ENCODE measurements at regions of chr1 and their contacts with region 1.

Region 1: DNA sequence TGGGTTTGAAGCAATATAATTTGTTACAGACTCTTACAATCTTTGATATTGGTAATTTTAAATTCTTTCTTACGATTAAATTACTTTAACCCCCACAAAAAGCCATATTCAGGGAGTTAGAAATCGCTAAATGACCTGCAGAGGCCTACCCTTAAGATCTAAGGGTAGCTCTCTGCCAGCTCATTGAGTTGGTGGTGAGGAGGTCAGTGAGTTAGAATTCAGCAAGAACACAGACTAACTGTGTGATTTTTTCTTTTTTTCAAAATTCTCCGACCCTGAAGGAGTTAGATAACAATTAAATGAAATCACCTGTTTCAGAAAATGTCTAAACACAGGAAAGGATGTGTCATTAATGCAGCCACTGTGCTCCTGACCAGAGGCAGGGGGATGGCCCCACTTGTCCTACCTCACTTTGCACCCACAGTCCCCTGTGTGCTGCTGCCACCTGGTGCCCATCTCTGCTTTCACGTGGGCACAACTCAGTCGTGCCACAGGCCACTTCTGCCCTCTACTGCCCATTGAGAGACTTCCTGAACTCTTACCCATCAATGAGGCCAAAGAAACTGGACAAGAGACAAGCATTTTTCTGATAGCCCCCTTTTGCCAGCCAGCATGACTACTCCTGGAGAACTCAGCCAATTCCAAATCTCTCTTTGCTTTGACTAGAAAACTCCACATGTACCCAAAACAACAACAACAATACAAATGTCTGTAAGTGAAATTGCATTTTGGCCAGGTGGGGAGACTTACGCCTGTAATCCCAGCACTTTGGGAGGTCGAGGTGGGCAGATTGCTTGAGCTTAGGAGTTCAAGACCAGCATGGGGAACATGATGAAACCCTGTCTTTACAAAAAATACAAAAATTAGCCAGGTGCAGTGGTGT is 8.4 kb downstream of the CFAP45 start:
- ATAC-seq: peak; percentile 91 to 100 (median 96)
- H3K4me3 ChIP-seq: no peak overlapping the region
- H3K27ac ChIP-seq: no peak overlapping the region
- H3K4me1 ChIP-seq: no peaks in the 10 kb centered on the region

Region 2: DNA sequence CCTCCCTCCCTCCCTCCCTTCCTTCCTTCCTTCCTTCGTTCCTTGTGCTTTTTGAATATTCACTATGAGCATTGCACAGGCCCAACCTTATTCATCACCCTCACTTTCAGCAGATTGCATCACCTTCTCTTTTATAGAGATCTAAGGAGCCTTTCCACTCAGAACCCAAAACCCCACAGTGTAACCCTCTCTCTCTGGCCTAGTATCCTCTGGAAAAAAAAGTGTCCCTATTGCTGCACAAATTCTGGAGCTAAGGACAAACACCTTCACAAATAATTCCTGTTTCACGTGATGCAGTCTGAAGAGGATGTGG is 381.3 kb before region 1 on chr1:
- in situ Hi-C with region 1: no loop called
- ATAC-seq: peak in 7 of 8 experiments; percentile 70 to 98 (median 75)
- H3K4me3 ChIP-seq: no peak overlapping the region
- H3K27ac ChIP-seq: peak overlapping the region in 1 of 2 donors; percentile 47
- H3K4me1 ChIP-seq: peaks cover 2 to 6% of the 10 kb centered on the region in 2 donors

Region 3: DNA sequence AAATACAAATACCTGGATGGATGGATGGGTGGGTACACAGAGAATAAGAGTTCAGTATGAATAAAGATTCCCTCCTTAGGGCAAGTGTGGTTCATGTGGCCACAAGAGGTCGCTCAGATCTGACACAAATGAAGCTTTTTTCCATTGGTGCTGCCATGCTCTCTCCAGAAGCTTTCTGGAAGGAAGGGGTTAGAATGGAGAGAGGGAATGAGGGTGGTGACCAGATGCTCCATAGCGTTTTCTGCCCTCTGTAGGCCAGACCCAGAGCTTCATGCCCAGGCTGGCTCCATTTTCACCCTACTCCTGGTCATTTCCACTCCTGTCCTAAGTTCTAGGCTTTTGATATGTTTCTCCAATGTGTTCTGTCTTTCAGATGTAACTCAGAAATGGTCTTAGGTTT is 92.6 kb before region 1 on chr1:
- in situ Hi-C with region 1: loop called in 4 of 9 experiments (anchors 10 to 25 kb)
- ATAC-seq: peak; percentile 84 to 99 (median 92)
- H3K4me3 ChIP-seq: no peak overlapping the region
- H3K27ac ChIP-seq: no peak overlapping the region
- H3K4me1 ChIP-seq: no peaks in the 10 kb centered on the region